Lower lobe of right lung (tissue), 2 donors: ENCODE measurements at regions of chr11 and their contacts with region 1.

Region 1: DNA sequence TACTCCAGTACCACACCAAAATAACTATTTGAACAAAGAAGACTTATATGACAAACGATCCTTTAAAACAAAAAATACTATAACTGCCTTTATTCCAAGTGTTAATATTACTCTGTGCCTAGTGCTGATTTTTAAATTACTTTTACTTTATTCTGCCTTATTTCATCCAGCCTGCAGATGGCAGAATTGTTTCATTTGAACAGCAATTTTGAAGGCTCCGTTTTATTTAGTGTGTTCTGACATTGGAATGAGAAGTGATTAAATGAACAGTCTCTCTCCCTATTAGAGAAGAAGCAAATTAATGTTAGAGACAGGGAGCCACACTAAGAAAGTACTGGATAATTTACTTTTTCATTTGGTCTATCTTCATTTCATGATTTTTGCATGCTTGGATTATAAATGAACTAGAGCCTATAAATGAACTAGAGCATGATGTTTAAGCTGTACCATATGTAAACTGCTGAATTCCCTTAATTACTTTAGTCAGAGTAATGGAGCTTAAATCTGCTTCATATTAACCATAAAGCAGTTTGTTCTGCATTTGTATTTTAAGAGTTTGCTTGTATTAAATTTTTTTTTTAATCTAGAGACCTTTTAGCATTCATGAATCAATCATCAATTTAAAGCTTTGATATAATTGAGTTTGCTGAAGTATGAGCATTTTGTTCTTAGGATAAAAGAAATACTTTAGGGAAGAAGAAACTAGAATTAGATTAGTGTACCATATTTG is 9.8 kb downstream of the PDHX start:
- DNase-seq: no peak
- ATAC-seq: peak; percentile 53 to 80
- H3K4me3 ChIP-seq: no peak overlapping the region
- H3K27ac ChIP-seq: no peak overlapping the region
- H3K4me1 ChIP-seq: peaks cover 34% of the 10 kb centered on the region
- H3K27me3 ChIP-seq: no peaks in the 10 kb centered on the region
- CTCF ChIP-seq: peak; percentile 69

Region 2: DNA sequence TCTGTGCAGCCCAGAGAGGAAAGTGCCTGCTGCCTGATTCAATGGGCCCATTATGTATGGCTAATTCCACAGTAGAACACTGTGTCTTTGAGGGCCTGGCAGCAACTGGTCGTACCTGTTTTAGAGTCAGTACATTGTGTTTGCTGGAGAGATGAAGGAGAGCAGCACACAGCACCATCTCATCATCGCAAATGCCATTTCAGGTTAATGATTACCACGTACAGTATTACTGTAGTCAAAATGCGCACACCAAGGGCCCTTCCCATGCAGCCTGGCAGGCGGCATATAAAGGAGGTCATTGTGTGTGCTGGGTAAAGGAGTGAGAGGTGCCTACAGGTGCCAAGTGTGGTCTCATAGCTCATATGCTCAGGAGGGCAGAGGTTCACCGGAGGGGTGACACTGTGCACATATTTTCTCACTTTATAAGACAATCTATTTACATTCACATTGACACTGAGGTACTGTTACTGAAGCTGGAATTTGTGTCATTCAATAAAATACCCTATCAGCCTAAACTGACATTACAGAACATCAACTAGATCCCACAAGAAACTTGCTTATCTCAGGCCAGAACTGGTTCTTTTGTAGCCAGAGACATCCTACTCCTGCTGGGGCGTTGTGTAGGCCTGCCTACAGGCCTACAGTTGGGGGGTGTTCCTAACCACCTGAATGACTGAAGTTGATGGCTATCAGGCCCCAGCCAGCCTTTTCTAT is 100.4 kb before region 1 on chr11:
- intact Hi-C with region 1: no loop called
- DNase-seq: peak; percentile 57
- ATAC-seq: peak; percentile 87 to 94
- H3K4me3 ChIP-seq: no peak overlapping the region
- H3K27ac ChIP-seq: peak overlapping the region; percentile 65
- H3K4me1 ChIP-seq: peaks cover 11% of the 10 kb centered on the region
- H3K27me3 ChIP-seq: no peaks in the 10 kb centered on the region
- CTCF ChIP-seq: no peak

Region 3: GRCh38 chr11:34874202-34874601 is 52.1 kb before region 1 on chr11:
- intact Hi-C with region 1: no loop called
- DNase-seq: no peak
- ATAC-seq: no peak
- H3K4me3 ChIP-seq: no peak overlapping the region
- H3K27ac ChIP-seq: no peak overlapping the region
- H3K4me1 ChIP-seq: no peaks in the 10 kb centered on the region
- H3K27me3 ChIP-seq: no peaks in the 10 kb centered on the region
- CTCF ChIP-seq: no peak

Region 4: GRCh38 chr11:35387111-35387982 is 461.1 kb after region 1 on chr11:
- intact Hi-C with region 1: loop called (anchors 5 kb)
- DNase-seq: no peak
- ATAC-seq: no peak
- H3K4me3 ChIP-seq: no peak overlapping the region
- H3K27ac ChIP-seq: no peak overlapping the region
- H3K4me1 ChIP-seq: peaks cover 20% of the 10 kb centered on the region
- H3K27me3 ChIP-seq: no peaks in the 10 kb centered on the region
- CTCF ChIP-seq: peak; percentile 49